ENCODE measurements at regions of chr11 and their contacts with region 1.

Region 1: GRCh38 chr11:87368858-87369480 is 331.2 kb downstream of the TMEM135 start:
- DNase-seq: peak in 1 of 2 donors; percentile 13
- ATAC-seq: peak; percentile 33 to 84 (median 67)
- H3K4me3 ChIP-seq: no peak overlapping the region
- H3K27ac ChIP-seq: peak overlapping the region in 6 of 10 donors; percentile 6 to 56 (median 35)
- H3K4me1 ChIP-seq: peaks cover 0 to 42% (median 24%) of the 10 kb centered on the region in 9 donors
- H3K27me3 ChIP-seq: no peaks in the 10 kb centered on the region
- CTCF ChIP-seq: no peak

Region 2: DNA sequence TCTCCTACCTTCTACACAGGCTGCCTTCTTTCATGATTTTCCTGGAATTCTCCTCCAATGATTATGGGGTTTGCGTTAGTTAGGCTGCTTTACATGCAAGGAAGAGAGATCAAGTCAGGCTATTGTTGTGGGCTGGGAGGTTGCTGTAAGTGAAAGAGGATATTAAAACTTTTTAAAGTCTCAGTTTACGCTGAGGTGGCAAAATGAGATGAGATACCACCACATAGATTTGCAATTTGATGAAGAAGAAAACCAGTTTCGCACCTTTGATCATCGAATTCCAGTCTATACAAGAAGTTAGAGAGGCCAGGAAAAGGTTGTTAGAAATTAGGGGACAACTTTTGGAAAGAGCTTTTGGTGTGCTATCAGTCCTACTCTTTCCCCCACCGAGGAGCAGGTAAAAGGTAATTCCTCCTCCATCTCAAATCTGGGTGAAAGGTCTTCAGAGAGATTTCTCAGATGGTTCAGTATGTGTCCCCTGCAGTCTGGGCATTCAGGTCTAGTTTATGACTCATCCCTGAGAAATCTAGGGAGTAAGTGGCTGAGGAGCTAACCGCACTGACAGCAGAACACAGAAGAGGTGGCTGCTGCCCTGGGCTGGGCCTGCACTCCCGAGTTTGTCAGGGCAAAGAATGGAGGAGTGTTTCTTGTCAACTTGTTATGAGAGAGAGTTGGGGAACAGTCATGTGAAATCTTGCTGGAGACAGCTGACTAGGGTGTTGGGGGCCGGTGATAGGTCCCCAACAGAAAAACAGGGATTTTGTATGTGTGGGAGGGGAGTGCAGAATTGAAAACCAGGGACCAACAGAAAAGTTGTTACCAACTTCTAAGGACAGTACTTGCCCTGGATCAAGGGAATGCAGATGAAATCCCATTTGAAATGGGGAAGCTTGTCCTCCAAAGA is 1479.0 kb before region 1 on chr11:
- intact Hi-C with region 1: no loop called
- DNase-seq: no peak
- ATAC-seq: peak in 2 of 8 donors; percentile 53 to 70
- H3K4me3 ChIP-seq: no peak overlapping the region
- H3K27ac ChIP-seq: no peak overlapping the region
- H3K4me1 ChIP-seq: no peaks in the 10 kb centered on the region
- H3K27me3 ChIP-seq: no peaks in the 10 kb centered on the region
- CTCF ChIP-seq: no peak

Region 3: GRCh38 chr11:87076260-87076783 is 292.6 kb before region 1 on chr11:
- intact Hi-C with region 1: no loop called
- DNase-seq: no peak
- ATAC-seq: no peak
- H3K4me3 ChIP-seq: no peak overlapping the region
- H3K27ac ChIP-seq: no peak overlapping the region
- H3K4me1 ChIP-seq: no peaks in the 10 kb centered on the region
- H3K27me3 ChIP-seq: no peaks in the 10 kb centered on the region
- CTCF ChIP-seq: no peak

Region 4: GRCh38 chr11:87421422-87421821 is 52.5 kb after region 1 on chr11:
- intact Hi-C with region 1: loop called in 1 of 10 experiments (anchors 5 kb)
- DNase-seq: peak in 1 of 2 donors; percentile 67
- ATAC-seq: peak; percentile 80 to 89 (median 86)
- H3K4me3 ChIP-seq: no peak overlapping the region
- H3K27ac ChIP-seq: peak overlapping the region in 1 of 10 donors; percentile 37
- H3K4me1 ChIP-seq: peaks cover 0 to 22% (median 11%) of the 10 kb centered on the region in 9 donors
- H3K27me3 ChIP-seq: no peaks in the 10 kb centered on the region
- CTCF ChIP-seq: peak; percentile 67 to 89 (median 85)

Region 5: GRCh38 chr11:88174709-88175568 is 806.0 kb after region 1 on chr11 and contains the start of gene RAB38:
- intact Hi-C with region 1: loop called in 1 of 10 experiments (anchors 5 kb)
- DNase-seq: peak; percentile 46 to 50
- ATAC-seq: peak; percentile 64 to 90 (median 88)
- H3K4me3 ChIP-seq: peak within 1 kb of the TSS in 9 of 10 donors; percentile 29 to 56 (median 52)
- H3K27ac ChIP-seq: no peak within 1 kb of the TSS
- H3K4me1 ChIP-seq: peaks cover 0 to 20% (median 9%) of the 10 kb centered on the region in 9 donors
- H3K27me3 ChIP-seq: peaks cover 0 to 10% (median 0%) of the 10 kb centered on the region in 7 donors
- CTCF ChIP-seq: no peak
- total RNA-seq, gene RAB38: 0.31 to 1.2 (median 0.44) TPM in 7 of 10 donors, not detected in the others

Measured in heart right ventricle (tissue), 16 donors.